RWPE1 (cell line): ENCODE measurements at regions of chr3 and their contacts with region 1.

Region 1: DNA sequence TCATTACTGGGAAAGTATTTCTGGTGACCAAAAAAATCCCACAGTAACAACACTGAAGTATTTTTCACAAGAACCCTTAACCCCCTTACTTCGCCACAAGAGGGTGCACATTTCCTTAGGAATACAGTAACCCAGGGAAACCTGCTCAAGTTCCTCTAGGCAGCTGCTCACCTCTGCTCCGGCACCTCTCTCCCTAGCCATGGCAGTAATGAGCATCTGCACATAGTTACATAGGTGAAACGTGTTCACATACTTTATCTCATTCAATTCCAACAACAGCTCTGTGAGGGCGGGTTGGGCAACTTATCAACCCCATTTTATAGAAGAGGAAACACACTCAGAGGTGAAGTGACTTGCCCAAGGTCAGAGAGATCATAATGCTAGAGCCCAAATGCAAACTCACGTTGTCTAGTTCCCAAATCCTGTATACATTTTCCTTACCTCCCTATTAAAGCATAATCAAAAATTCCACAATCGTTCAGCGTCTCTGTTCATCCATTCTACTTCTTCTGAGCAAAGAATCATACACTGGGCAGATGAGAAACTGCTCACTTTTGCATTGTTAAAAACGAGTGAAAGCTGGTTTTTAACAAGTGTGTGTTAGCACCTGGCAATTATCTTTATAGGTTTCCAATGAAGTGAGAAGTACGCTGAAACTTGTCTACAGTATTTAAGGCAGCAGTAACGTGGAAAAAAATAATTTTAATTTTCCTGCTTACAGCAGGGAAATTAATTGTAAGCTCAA is 90.7 kb downstream of the IGF2BP2 start:
- DNase-seq: peak; percentile 89
- H3K27ac ChIP-seq: no peak overlapping the region; the same call in 1 of the 2 replicates
- CTCF ChIP-seq: peak; percentile 67

Region 2: GRCh38 chr3:185290266-185290665 is 443.9 kb before region 1 on chr3:
- CTCF ChIA-PET with region 1: no interaction called
- POLR2A ChIA-PET with region 1: no interaction called
- DNase-seq: no peak
- H3K27ac ChIP-seq: no peak overlapping the region
- CTCF ChIP-seq: no peak

Region 3: GRCh38 chr3:185572183-185572582 is 162.0 kb before region 1 on chr3:
- CTCF ChIA-PET with region 1: no interaction called
- POLR2A ChIA-PET with region 1: no interaction called
- DNase-seq: no peak
- H3K27ac ChIP-seq: no peak overlapping the region
- CTCF ChIP-seq: no peak

Region 4: GRCh38 chr3:185659942-185660921 is 73.9 kb before region 1 on chr3:
- CTCF ChIA-PET with region 1: interaction called, 10 read pairs
- POLR2A ChIA-PET with region 1: no interaction called
- DNase-seq: peak; percentile 67
- H3K27ac ChIP-seq: peak overlapping the region; percentile 97
- CTCF ChIP-seq: peak; percentile 96

Region 5: DNA sequence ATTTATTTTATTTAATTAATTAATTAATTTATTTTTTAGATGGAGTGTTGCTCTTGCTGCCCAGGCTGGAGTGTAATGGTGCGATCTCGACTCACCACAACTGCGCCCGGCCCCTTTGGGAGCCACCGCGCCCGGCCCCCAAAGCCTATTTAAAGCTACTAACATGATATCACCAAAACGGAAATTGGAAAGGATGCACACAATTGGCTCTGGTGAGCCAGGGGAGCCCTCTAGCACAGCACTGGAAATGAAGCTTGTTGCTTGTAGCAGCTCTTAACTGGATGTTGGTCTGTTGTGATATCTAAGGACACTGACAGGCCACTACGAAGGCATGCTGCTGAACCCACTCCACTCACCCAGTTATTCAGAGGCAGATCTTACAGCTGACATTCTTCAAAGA is 13.8 kb before region 1 on chr3:
- CTCF ChIA-PET with region 1: no interaction called
- POLR2A ChIA-PET with region 1: no interaction called
- DNase-seq: no peak
- H3K27ac ChIP-seq: no peak overlapping the region; the same call in 1 of the 2 replicates
- CTCF ChIP-seq: no peak

Region 6: GRCh38 chr3:185764163-185764979 is 30.2 kb after region 1 on chr3:
- CTCF ChIA-PET with region 1: interaction called, 21 read pairs
- POLR2A ChIA-PET with region 1: no interaction called
- DNase-seq: no peak
- H3K27ac ChIP-seq: no peak overlapping the region
- CTCF ChIP-seq: no peak